PC-3 (cell line): ENCODE measurements at regions of chr6 and their contacts with region 1.

Region 1: GRCh38 chr6:68876792-68877493 is 241.9 kb downstream of the ADGRB3 start:
- DNase-seq: peak; percentile 35
- ATAC-seq: no peak
- H3K4me3 ChIP-seq: no peak overlapping the region
- H3K27ac ChIP-seq: no peak overlapping the region
- H3K4me1 ChIP-seq: no peaks in the 10 kb centered on the region
- H3K27me3 ChIP-seq: no peaks in the 10 kb centered on the region
- CTCF ChIP-seq: peak; percentile 54

Region 2: DNA sequence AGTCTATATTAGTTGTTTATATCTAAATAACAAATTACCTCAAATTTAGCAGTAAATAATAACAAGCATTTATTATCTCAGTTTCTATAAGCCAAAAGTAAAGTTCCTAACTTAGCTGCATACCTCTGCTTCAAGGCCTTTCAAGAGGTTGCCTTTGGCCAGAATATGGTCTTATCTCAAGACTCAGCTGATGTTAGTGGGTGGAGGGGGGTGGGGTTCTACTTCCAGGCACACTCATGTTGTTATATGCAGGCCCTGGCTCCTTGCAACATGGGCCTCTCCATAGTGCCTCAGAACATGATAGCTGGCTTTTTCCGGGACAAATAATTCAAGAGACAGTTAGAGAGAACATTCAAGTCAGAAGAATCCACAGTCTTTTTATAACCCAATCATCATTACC is 24.1 kb after region 1 on chr6:
- CTCF ChIA-PET with region 1: no interaction called
- POLR2A ChIA-PET with region 1: no interaction called
- intact Hi-C with region 1: no loop called
- DNase-seq: no peak
- ATAC-seq: no peak
- H3K4me3 ChIP-seq: no peak overlapping the region
- H3K27ac ChIP-seq: no peak overlapping the region
- H3K4me1 ChIP-seq: no peaks in the 10 kb centered on the region
- H3K27me3 ChIP-seq: no peaks in the 10 kb centered on the region
- CTCF ChIP-seq: no peak

Region 3: DNA sequence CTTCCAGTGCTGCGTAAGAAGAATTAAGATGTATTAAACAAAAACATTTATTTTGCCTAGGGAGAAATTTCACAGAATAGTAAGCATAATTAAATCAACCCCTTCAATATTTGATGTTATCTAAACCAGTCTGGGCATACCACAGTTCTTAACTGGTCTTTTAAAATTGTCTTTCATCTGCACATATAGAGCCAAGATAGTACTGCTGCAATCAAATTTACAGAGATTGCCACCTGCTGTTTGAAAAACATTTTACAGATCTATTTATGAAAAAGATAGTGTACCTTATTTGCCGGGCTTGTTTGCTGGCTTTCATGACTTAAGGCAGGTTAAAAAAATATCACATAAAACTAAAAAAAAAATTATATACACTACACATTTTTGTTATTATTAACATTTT is 81.4 kb after region 1 on chr6:
- CTCF ChIA-PET with region 1: no interaction called
- POLR2A ChIA-PET with region 1: no interaction called
- intact Hi-C with region 1: loop called (anchors 2 kb)
- DNase-seq: peak; percentile 15
- ATAC-seq: no peak
- H3K4me3 ChIP-seq: no peak overlapping the region
- H3K27ac ChIP-seq: no peak overlapping the region
- H3K4me1 ChIP-seq: no peaks in the 10 kb centered on the region
- H3K27me3 ChIP-seq: no peaks in the 10 kb centered on the region
- CTCF ChIP-seq: peak; percentile 41; the same call in 1 of the 2 replicates